Heart right ventricle (tissue), 16 donors: ENCODE measurements at regions of chr9 and their contacts with region 1.

Region 1: DNA sequence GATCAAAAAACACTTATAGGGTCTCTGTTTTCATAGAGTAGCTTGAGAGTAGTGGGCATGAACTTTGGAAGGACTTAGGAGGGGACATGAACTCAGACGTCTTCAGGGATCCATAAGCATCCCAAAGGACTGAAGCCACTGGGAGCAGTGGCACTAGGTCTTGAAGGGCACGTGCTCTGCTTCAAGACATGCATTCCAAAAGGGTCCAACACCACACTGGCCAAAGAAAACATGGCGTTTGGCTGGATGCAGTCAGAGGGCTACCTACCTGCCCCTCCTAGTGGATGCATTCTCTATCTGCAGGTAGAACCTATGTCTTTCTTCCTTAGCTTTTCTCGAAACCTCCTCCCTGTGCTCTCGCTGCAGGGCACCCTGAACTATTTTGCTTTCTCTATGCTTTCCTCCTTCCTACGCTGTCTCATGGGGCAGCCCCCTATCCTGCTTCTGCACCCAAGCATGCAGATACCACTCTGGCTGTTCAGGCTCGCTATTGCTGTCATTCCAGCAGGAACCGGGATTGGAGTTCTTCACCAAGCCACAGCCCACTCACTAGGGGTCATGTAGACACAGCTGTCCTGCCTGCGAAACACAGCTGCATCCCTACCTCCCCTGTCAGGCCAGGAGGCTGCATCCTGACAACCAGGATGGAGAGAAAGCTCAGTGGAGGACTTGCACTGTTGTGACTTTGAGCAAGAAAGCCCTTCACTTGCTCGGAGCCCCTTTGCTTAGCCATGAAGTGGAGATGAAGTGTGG is 11.9 kb downstream of the FAM240B start:
- DNase-seq: no peak
- ATAC-seq: no peak
- H3K4me3 ChIP-seq: no peak overlapping the region
- H3K27ac ChIP-seq: no peak overlapping the region
- H3K4me1 ChIP-seq: peaks cover 0 to 3% (median 0%) of the 10 kb centered on the region in 9 donors
- H3K27me3 ChIP-seq: peaks cover 0 to 6% (median 0%) of the 10 kb centered on the region in 7 donors
- CTCF ChIP-seq: peak in 1 of 9 donors; percentile 26

Region 2: GRCh38 chr9:38362852-38363593 is 345.0 kb before region 1 on chr9:
- intact Hi-C with region 1: no loop called
- DNase-seq: peak in 1 of 2 donors; percentile 41
- ATAC-seq: peak; percentile 70 to 88 (median 82)
- H3K4me3 ChIP-seq: peak overlapping the region in 1 of 10 donors; percentile 3
- H3K27ac ChIP-seq: no peak overlapping the region
- H3K4me1 ChIP-seq: peaks cover 0 to 7% (median 0%) of the 10 kb centered on the region in 9 donors
- H3K27me3 ChIP-seq: no peaks in the 10 kb centered on the region
- CTCF ChIP-seq: peak; percentile 14 to 77 (median 65)

Region 3: DNA sequence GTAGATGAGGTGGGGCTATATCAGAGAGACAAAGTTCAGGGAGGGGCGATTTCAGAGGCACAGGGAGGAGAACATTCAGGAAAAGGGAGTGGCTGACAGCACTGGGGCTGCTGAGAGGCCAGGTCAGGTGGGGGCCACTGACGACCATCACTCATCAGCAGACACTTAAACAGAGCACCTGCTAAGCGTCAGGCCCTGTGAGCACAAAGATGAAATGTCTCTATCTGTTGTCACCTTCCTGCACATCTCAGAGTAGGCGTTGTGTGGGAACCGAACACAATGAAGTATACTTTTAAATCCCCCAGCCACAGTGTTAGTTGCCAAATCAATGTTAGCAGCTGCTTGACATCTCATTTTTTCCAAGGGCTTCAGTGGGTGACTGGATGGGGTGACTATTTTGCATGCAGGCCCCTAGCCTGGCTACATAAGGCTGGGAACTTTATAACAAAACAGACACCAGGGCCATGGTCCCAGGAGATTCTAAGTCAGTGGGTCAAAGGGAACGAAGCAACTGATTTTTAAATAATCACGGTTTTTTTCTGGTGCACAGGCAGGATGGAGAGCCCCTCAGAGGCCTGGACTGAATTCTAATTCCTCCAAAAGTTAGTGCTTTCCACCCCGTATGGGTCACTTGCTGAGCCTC is 56.5 kb before region 1 on chr9:
- intact Hi-C with region 1: loop called in 3 of 10 experiments (anchors 10 kb)
- DNase-seq: peak in 1 of 2 donors; percentile 28
- ATAC-seq: peak; percentile 18 to 65 (median 52)
- H3K4me3 ChIP-seq: peak overlapping the region in 4 of 10 donors; percentile 2 to 43 (median 27)
- H3K27ac ChIP-seq: peak overlapping the region in 8 of 10 donors; percentile 17 to 79 (median 77)
- H3K4me1 ChIP-seq: peaks cover 0 to 22% (median 0%) of the 10 kb centered on the region in 9 donors
- H3K27me3 ChIP-seq: no peaks in the 10 kb centered on the region
- CTCF ChIP-seq: no peak